WTC11 (cell line): ENCODE measurements at regions of chr22 and their contacts with region 1.

Region 1: GRCh38 chr22:30802202-30803166 is 107.8 kb downstream of the OSBP2 start:
- DNase-seq: peak; percentile 92
- ATAC-seq: peak; percentile 93
- H3K4me3 Mint-ChIP-seq: peak overlapping the region; percentile 62
- H3K27ac Mint-ChIP-seq: no peak overlapping the region
- H3K4me1 Mint-ChIP-seq: peaks cover 25% of the 10 kb centered on the region
- H3K27me3 Mint-ChIP-seq: peaks cover 54% of the 10 kb centered on the region
- CTCF ChIP-seq: no peak

Region 2: DNA sequence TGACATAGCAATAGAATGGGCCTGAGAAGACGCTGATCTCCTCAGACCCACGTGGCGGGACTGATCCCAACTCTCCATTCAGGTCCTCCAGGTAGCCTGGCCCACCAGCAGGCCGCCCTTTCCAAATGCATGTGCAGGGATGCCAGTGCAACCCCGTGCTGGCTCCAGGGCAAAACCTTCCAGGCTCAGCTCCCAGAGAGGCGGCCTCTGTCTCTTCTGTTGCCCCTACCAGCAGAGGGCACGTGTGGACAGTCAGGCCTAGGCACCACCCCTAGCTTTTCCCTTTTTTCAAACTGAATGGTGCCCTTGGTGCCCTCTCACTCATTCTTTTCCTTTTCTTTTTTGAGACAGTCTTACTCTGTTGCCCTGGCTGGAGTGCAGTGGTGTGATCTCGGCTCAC is 13.9 kb after region 1 on chr22:
- CTCF ChIA-PET with region 1: interaction called, 14 read pairs
- POLR2A ChIA-PET with region 1: no interaction called
- DNase-seq: no peak
- ATAC-seq: peak; percentile 73
- H3K4me3 Mint-ChIP-seq: no peak overlapping the region
- H3K27ac Mint-ChIP-seq: no peak overlapping the region
- H3K4me1 Mint-ChIP-seq: peaks cover 5% of the 10 kb centered on the region; the same call in 1 of the 2 replicates
- H3K27me3 Mint-ChIP-seq: peaks cover 10% of the 10 kb centered on the region
- CTCF ChIP-seq: no peak

Region 3: GRCh38 chr22:30822216-30823014 is 19.9 kb after region 1 on chr22:
- CTCF ChIA-PET with region 1: interaction called, 14 read pairs
- POLR2A ChIA-PET with region 1: no interaction called
- DNase-seq: peak; percentile 46
- ATAC-seq: peak; percentile 50
- H3K4me3 Mint-ChIP-seq: peak overlapping the region; percentile 65
- H3K27ac Mint-ChIP-seq: no peak overlapping the region
- H3K4me1 Mint-ChIP-seq: peaks cover 14% of the 10 kb centered on the region
- H3K27me3 Mint-ChIP-seq: peaks cover 37% of the 10 kb centered on the region
- CTCF ChIP-seq: no peak

Region 4: GRCh38 chr22:30843245-30843644 is 40.8 kb after region 1 on chr22:
- CTCF ChIA-PET with region 1: no interaction called
- POLR2A ChIA-PET with region 1: no interaction called
- DNase-seq: no peak
- ATAC-seq: no peak
- H3K4me3 Mint-ChIP-seq: no peak overlapping the region
- H3K27ac Mint-ChIP-seq: no peak overlapping the region
- H3K4me1 Mint-ChIP-seq: no peaks in the 10 kb centered on the region
- H3K27me3 Mint-ChIP-seq: no peaks in the 10 kb centered on the region
- CTCF ChIP-seq: no peak

Region 5: DNA sequence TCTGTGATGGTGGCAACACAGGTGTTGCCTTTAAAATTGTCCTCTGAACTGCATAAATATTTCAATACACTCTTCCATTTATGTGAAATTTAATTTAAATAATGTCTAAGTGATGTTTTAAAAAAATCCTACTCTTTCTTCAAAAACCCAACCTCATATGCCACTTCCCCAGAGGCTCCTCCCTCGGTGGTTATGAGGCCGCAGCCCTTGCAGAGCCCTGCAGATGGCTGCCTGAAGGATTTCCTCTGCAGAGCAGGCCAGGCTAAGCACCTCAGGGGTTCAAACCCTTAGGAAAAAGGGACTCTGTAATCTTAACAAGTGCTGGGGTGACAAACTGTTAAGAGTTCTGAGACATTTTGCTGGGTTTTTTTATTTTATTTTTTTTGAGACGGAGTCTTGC is 140.9 kb after region 1 on chr22:
- CTCF ChIA-PET with region 1: no interaction called
- POLR2A ChIA-PET with region 1: no interaction called
- DNase-seq: no peak
- ATAC-seq: no peak
- H3K4me3 Mint-ChIP-seq: no peak overlapping the region
- H3K27ac Mint-ChIP-seq: no peak overlapping the region
- H3K4me1 Mint-ChIP-seq: no peaks in the 10 kb centered on the region
- H3K27me3 Mint-ChIP-seq: no peaks in the 10 kb centered on the region
- CTCF ChIP-seq: no peak